ENCODE measurements at regions of chr6 and their contacts with region 1.

Region 1: DNA sequence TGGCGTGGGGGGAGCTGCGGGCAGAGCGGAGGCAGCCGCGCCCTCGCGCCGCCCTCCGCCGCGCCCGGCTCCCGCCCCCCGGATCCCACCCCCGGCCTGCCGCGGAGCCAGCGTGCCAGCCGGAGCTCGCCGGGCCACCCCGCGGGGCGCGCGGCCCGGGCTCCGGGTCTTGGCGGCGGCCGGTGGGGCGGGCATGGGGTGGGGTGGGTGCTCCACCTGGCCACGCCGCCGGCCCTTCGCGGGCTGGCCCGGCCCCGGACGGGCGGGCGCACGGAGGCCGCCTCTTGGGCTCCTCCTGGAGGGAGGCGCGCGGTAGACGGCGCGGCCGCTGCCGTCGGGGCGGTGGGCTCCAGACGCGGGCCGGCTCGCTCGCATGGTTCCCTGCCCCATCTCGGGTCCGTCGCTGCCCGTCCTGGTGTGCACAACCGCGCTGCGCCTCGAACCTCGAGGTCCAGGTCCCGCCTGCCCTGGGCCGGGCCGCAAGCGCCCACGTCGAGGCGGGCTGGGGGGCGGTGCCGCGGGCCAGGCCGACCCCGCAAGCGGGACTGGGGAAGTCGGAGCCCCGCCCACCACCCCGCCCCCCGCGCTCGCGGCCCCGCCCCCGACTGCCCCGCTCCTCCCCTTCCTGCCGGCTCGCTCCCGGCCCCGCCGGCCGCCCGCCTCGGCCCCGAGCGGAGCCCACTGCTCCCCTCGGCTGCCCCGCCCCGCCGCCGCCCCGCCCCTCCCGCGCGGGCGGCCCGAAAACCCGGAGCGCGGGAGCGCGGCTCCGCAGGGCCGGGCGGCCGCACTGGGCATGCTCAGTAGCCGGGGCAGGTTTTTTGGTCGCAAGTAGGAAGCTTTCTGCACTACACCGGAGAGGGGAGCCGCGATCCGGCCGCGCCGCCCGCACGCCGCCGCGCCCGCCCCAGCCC is at the start of gene CDYL:
- DNase-seq: peak; percentile 72
- ATAC-seq: peak; percentile 87
- H3K4me3 ChIP-seq: peak within 1 kb of the TSS; percentile 67 to 73
- H3K27ac ChIP-seq: peak within 1 kb of the TSS; percentile 84
- H3K4me1 ChIP-seq: peaks cover 9 to 39% of the 10 kb centered on the region in 2 experiments; a peak in 3 of 4 replicates
- H3K27me3 ChIP-seq: no peaks in the 10 kb centered on the region
- CTCF ChIP-seq: peak in 2 of 3 experiments; percentile 6 to 22; a peak in 1 of 6 replicates
- POLR2A ChIP-seq: no peak
- RAD21 ChIP-seq: no peak
- total RNA-seq, gene CDYL: 42.6 TPM

Region 2: GRCh38 chr6:4358414-4359114 is 417.3 kb before region 1 on chr6:
- CTCF ChIA-PET with region 1: no interaction called
- POLR2A ChIA-PET with region 1: no interaction called
- RAD21 ChIA-PET with region 1: no interaction called
- intact Hi-C with region 1: loop called (anchors 5 kb)
- DNase-seq: peak; percentile 98
- ATAC-seq: peak; percentile 92
- H3K4me3 ChIP-seq: peak overlapping the region in 1 of 2 experiments; percentile 39; a peak in 2 of 4 replicates
- H3K27ac ChIP-seq: peak overlapping the region; percentile 69
- H3K4me1 ChIP-seq: peaks cover 26 to 53% of the 10 kb centered on the region in 2 experiments
- H3K27me3 ChIP-seq: no peaks in the 10 kb centered on the region
- CTCF ChIP-seq: no peak
- POLR2A ChIP-seq: no peak
- RAD21 ChIP-seq: peak; percentile 36

Region 3: GRCh38 chr6:4647414-4648365 is 128.1 kb before region 1 on chr6:
- CTCF ChIA-PET with region 1: interaction called, 5 read pairs
- POLR2A ChIA-PET with region 1: interaction called, 4 read pairs
- RAD21 ChIA-PET with region 1: interaction called in 1 of 2 experiments, 5 read pairs
- intact Hi-C with region 1: loop called (anchors 1 kb)
- DNase-seq: peak; percentile 74
- ATAC-seq: peak; percentile 96
- H3K4me3 ChIP-seq: peak overlapping the region; percentile 0 to 36; a peak in 2 of 4 replicates
- H3K27ac ChIP-seq: no peak overlapping the region; the same call in 1 of the 2 replicates
- H3K4me1 ChIP-seq: peaks cover 7 to 13% of the 10 kb centered on the region in 2 experiments
- H3K27me3 ChIP-seq: no peaks in the 10 kb centered on the region
- CTCF ChIP-seq: no peak
- POLR2A ChIP-seq: no peak
- RAD21 ChIP-seq: peak; percentile 19; the same call in 1 of the 2 replicates

Measured in HCT116 (cell line).